ENCODE measurements at regions of chr15 and their contacts with region 1.

Region 1: DNA sequence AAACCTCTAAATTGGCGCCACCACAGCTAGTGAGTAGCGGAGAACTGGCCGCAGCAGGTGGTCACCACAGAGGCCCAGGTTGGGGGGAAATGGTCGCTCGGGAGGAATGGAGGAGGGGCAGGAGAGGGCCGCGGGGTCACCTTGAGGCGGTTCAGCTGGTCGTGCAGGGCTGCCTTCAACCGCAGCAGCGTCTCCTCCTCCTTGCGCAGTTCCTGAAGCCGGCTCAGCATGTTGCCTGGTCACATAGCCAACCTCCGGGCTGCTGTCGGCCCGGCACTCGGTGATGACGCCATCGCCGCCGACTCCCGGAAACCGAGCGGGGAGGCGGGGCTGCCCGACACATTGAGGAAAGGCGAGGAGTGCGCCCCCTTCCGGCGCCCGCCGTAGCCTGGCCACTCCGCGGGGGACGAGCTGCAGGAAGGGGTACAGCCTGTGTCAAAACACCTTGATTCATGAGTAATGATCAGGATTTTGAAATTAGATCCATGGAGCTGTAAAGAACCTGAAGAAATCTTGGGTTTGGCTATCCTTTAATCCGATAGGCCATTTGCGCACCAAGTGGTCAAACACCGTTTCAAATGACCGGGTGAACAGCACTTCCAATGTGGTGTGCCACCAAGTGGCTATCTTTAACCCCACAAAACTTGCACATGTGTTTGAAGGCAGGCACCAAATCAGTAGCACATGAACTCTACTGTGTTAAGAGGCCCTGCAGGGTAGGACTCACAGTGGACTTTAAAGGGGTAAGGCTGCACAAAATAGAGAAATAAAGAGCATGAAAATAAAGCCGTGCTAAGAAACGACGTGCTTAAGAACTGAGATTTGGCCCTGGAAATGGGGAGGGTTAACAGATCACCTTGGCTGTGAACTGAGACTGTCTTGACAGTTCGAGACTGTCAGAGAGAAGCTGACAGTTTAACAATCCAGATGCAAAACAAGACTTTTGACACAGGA is at the start of gene SNAPC5:
- DNase-seq: peak; percentile 97
- H3K4me3 ChIP-seq: peak within 1 kb of the TSS; percentile 95
- H3K27ac ChIP-seq: peak within 1 kb of the TSS; percentile 81
- H3K4me1 ChIP-seq: peaks cover 12% of the 10 kb centered on the region
- H3K27me3 ChIP-seq: no peaks in the 10 kb centered on the region
- CTCF ChIP-seq: peak; percentile 98
- total RNA-seq, gene SNAPC5: 17.2 to 21.3 TPM

Region 2: DNA sequence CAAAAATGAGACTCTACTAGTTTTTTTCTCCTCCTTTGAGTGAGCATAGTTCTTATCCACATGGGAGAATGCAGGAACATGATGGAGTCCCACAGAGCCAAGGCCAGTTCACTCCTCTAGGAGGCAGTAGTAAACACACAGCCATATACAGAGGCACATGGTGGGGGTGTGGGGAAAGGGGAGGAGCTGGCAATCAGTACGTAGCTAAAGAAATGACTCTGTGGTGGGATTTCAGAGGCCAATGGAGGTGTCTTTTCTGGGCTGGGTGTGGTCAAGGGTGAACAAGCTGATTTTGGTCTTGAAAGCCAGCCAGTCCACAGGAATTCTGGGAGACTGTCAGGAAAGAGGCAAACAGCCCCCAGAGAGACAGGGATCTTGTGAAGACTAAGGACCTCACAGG is 635.1 kb before region 1 on chr15:
- intact Hi-C with region 1: no loop called
- DNase-seq: peak; percentile 55
- H3K4me3 ChIP-seq: no peak overlapping the region
- H3K27ac ChIP-seq: no peak overlapping the region
- H3K4me1 ChIP-seq: no peaks in the 10 kb centered on the region
- H3K27me3 ChIP-seq: no peaks in the 10 kb centered on the region
- CTCF ChIP-seq: peak; percentile 24

Region 3: GRCh38 chr15:66306381-66306780 is 191.4 kb before region 1 on chr15:
- intact Hi-C with region 1: loop called (anchors 10 kb)
- DNase-seq: no peak
- H3K4me3 ChIP-seq: no peak overlapping the region
- H3K27ac ChIP-seq: no peak overlapping the region
- H3K4me1 ChIP-seq: no peaks in the 10 kb centered on the region
- H3K27me3 ChIP-seq: no peaks in the 10 kb centered on the region
- CTCF ChIP-seq: no peak

Region 4: GRCh38 chr15:66386204-66387123 is 111.3 kb before region 1 on chr15 and contains the start of gene MAP2K1:
- intact Hi-C with region 1: loop called (anchors 2 kb)
- DNase-seq: peak; percentile 98
- H3K4me3 ChIP-seq: peak within 1 kb of the TSS; percentile 76
- H3K27ac ChIP-seq: peak within 1 kb of the TSS; percentile 92
- H3K4me1 ChIP-seq: peaks cover 4% of the 10 kb centered on the region
- H3K27me3 ChIP-seq: no peaks in the 10 kb centered on the region
- CTCF ChIP-seq: peak; percentile 57
- total RNA-seq, gene MAP2K1: 50.0 to 53.2 TPM

Region 5: GRCh38 chr15:66429117-66429516 is 68.7 kb before region 1 on chr15:
- intact Hi-C with region 1: no loop called
- DNase-seq: no peak
- H3K4me3 ChIP-seq: no peak overlapping the region
- H3K27ac ChIP-seq: no peak overlapping the region
- H3K4me1 ChIP-seq: no peaks in the 10 kb centered on the region
- H3K27me3 ChIP-seq: no peaks in the 10 kb centered on the region
- CTCF ChIP-seq: no peak

Region 6: GRCh38 chr15:66578286-66578875 is 80.6 kb after region 1 on chr15:
- intact Hi-C with region 1: no loop called
- DNase-seq: no peak
- H3K4me3 ChIP-seq: no peak overlapping the region
- H3K27ac ChIP-seq: no peak overlapping the region
- H3K4me1 ChIP-seq: no peaks in the 10 kb centered on the region
- H3K27me3 ChIP-seq: no peaks in the 10 kb centered on the region
- CTCF ChIP-seq: no peak